ENCODE measurements at regions of chr3 and their contacts with region 1.

Region 1: GRCh38 chr3:38738630-38739395 is 77.2 kb downstream of the SCN10A start:
- DNase-seq: peak; percentile 70
- H3K4me3 ChIP-seq: no peak overlapping the region
- H3K27ac ChIP-seq: no peak overlapping the region
- H3K4me1 ChIP-seq: no peaks in the 10 kb centered on the region
- H3K27me3 ChIP-seq: no peaks in the 10 kb centered on the region
- CTCF ChIP-seq: peak; percentile 78
- EP300 ChIP-seq: no peak
- RAD21 ChIP-seq: peak; percentile 80

Region 2: GRCh38 chr3:38725726-38726419 is 12.9 kb before region 1 on chr3:
- CTCF ChIA-PET with region 1: interaction called, 38 read pairs
- POLR2A ChIA-PET with region 1: no interaction called
- DNase-seq: peak; percentile 27
- H3K4me3 ChIP-seq: no peak overlapping the region
- H3K27ac ChIP-seq: peak overlapping the region in 1 of 2 experiments; percentile 55; a peak in 2 of 4 replicates
- H3K4me1 ChIP-seq: peaks cover 0 to 42% of the 10 kb centered on the region in 2 experiments; a peak in 3 of 4 replicates
- H3K27me3 ChIP-seq: no peaks in the 10 kb centered on the region
- CTCF ChIP-seq: no peak
- EP300 ChIP-seq: peak in 1 of 2 experiments; percentile 18; a peak in 1 of 4 replicates
- RAD21 ChIP-seq: no peak